ENCODE measurements at regions of chr19 and their contacts with region 1.

Region 1: GRCh38 chr19:13430790-13431582 is 75.3 kb downstream of the CACNA1A start:
- DNase-seq: no peak
- ATAC-seq: peak; percentile 82
- H3K4me3 ChIP-seq: no peak overlapping the region
- H3K27ac ChIP-seq: no peak overlapping the region
- H3K4me1 ChIP-seq: no peaks in the 10 kb centered on the region
- H3K27me3 ChIP-seq: no peaks in the 10 kb centered on the region
- CTCF ChIP-seq: peak; percentile 71 to 87 (median 79)
- EP300 ChIP-seq: no peak
- POLR2A ChIP-seq: no peak
- RAD21 ChIP-seq: peak; percentile 78

Region 2: GRCh38 chr19:13366529-13367143 is 64.3 kb before region 1 on chr19:
- CTCF ChIA-PET with region 1: no interaction called
- POLR2A ChIA-PET with region 1: no interaction called
- RAD21 ChIA-PET with region 1: no interaction called
- SMC1A ChIA-PET with region 1: no interaction called
- in situ Hi-C with region 1: no loop called
- intact Hi-C with region 1: loop called (anchors 1 kb)
- DNase-seq: no peak
- ATAC-seq: no peak
- H3K4me3 ChIP-seq: no peak overlapping the region
- H3K27ac ChIP-seq: no peak overlapping the region
- H3K4me1 ChIP-seq: no peaks in the 10 kb centered on the region
- H3K27me3 ChIP-seq: no peaks in the 10 kb centered on the region
- CTCF ChIP-seq: peak in 2 of 3 experiments; percentile 35; a peak in 3 of 6 replicates
- EP300 ChIP-seq: no peak
- POLR2A ChIP-seq: no peak
- RAD21 ChIP-seq: peak; percentile 52